CD4-positive, alpha-beta memory T cell (primary cell): ENCODE measurements at regions of chr11 and their contacts with region 1.

Region 1: DNA sequence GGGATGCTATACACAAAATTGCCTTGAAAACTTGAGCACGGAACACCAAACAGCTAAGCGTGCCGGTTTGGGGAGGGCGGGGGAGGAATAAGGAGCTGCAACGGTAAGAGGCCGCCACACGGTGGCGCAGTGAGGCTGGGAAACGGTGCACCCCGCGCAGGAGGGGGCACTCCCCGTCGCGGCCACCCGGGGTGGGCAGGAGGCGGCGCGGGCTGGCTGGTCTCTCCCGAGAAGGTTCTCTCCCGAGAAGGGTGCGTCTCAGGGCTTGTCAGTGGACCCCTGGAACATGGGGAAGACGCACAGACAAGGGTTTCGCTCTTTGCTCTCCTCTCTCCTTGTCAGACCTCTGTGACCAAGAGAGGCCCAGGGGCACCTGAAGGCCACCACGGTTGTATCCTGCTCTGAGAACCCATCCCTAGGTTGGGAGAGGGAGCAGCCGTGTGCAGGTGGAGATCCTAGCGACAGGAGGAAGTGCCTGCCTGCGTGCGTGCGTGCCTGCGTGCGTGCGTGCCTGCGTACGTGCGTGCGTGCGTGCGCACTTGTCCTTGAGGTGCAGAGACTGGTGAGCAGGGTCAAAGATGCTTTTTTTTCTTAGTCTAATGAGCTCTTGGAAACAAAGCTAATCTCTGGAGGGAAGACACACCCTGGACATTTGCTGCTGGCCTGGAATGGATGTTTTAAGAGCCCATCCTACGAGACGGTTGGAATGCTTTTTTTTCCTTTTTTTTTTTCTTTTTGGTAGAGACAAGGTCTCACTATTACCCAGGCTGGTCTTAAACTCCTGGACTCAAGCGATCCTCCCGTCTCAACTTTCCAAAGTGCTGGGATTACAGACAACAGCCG is 18.1 kb upstream of the JAM3 start:
- DNase-seq: peak; percentile 68 to 77 (median 70)
- H3K4me3 ChIP-seq: no peak overlapping the region
- H3K4me3 Mint-ChIP-seq: peak overlapping the region in 2 of 8 donors; percentile 36 to 65
- H3K27ac ChIP-seq: no peak overlapping the region
- H3K27ac Mint-ChIP-seq: peak overlapping the region in 1 of 7 donors; percentile 22
- H3K4me1 ChIP-seq: peaks cover 11% of the 10 kb centered on the region
- H3K4me1 Mint-ChIP-seq: peaks cover 0 to 4% (median 2%) of the 10 kb centered on the region in 4 donors
- H3K27me3 ChIP-seq: no peaks in the 10 kb centered on the region
- H3K27me3 Mint-ChIP-seq: peaks cover 17 to 23% of the 10 kb centered on the region in 2 donors

Region 2: GRCh38 chr11:133821776-133822175 is 229.0 kb before region 1 on chr11:
- CTCF ChIA-PET with region 1: no interaction called
- POLR2A ChIA-PET with region 1: no interaction called
- intact Hi-C with region 1: no loop called
- DNase-seq: no peak
- H3K4me3 ChIP-seq: no peak overlapping the region
- H3K4me3 Mint-ChIP-seq: no peak overlapping the region
- H3K27ac ChIP-seq: no peak overlapping the region
- H3K27ac Mint-ChIP-seq: no peak overlapping the region
- H3K4me1 ChIP-seq: no peaks in the 10 kb centered on the region
- H3K4me1 Mint-ChIP-seq: no peaks in the 10 kb centered on the region
- H3K27me3 ChIP-seq: no peaks in the 10 kb centered on the region
- H3K27me3 Mint-ChIP-seq: peaks cover 2 to 8% of the 10 kb centered on the region in 2 donors

Region 3: DNA sequence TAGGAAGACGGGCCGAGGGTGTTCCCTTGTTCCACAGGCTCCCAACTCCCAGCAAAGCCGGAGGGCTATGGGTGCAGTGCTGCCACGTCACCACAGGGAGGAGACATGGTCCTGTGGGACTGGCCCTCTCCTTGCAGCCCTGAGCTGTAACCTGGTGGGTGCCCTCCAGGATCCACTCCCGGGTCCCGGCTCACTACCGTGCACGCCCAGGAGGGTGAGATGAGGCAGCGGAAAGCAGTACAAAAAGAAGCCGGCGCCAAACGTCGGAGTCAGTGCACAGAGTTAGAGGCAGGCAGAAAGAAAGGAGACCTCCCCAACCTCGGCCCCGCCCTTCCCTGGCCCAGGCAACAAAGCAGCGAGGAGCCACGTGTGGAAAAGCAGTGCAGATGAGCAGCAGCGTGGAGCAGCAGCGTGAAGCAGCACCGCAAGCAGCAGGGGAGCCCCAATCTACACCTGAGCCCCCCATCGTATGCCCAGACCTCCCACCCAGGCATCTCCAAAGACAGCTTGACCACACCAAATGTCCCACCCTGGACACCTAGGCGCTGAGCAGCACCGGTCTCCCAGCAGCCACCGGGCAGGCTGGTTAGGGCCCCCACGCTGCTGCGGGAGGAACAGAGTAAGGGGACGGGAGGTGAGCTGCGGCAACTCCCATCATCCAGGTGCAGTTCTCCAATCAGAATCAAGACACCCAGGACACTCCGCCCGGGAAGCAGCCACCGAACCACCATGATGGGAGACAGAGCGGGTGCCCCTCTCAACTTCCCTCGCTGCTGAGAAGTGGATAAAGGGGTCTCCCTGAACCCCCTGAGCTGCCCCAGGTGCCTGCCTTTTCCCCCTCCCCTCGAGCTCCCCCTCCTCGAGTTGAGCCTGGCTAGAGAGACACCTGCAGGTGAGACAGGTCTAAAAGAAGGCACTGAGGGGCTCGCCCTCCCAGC is 122.8 kb before region 1 on chr11:
- CTCF ChIA-PET with region 1: interaction called, 40 read pairs
- POLR2A ChIA-PET with region 1: interaction called, 6 read pairs
- intact Hi-C with region 1: loop called (anchors 1 kb)
- DNase-seq: peak; percentile 64 to 79 (median 74)
- H3K4me3 ChIP-seq: peak overlapping the region in 1 of 2 donors; percentile 62
- H3K4me3 Mint-ChIP-seq: peak overlapping the region; percentile 85 to 96 (median 92)
- H3K27ac ChIP-seq: peak overlapping the region; percentile 44
- H3K27ac Mint-ChIP-seq: peak overlapping the region; percentile 49 to 95 (median 91)
- H3K4me1 ChIP-seq: peaks cover 28% of the 10 kb centered on the region
- H3K4me1 Mint-ChIP-seq: peaks cover 15 to 36% (median 20%) of the 10 kb centered on the region in 4 donors
- H3K27me3 ChIP-seq: no peaks in the 10 kb centered on the region
- H3K27me3 Mint-ChIP-seq: no peaks in the 10 kb centered on the region

Region 4: GRCh38 chr11:134019500-134019899 is 31.3 kb before region 1 on chr11:
- CTCF ChIA-PET with region 1: interaction called, 14 read pairs
- POLR2A ChIA-PET with region 1: no interaction called
- intact Hi-C with region 1: no loop called
- DNase-seq: no peak
- H3K4me3 ChIP-seq: no peak overlapping the region
- H3K4me3 Mint-ChIP-seq: no peak overlapping the region
- H3K27ac ChIP-seq: no peak overlapping the region
- H3K27ac Mint-ChIP-seq: peak overlapping the region in 1 of 7 donors; percentile 36
- H3K4me1 ChIP-seq: no peaks in the 10 kb centered on the region
- H3K4me1 Mint-ChIP-seq: no peaks in the 10 kb centered on the region
- H3K27me3 ChIP-seq: no peaks in the 10 kb centered on the region
- H3K27me3 Mint-ChIP-seq: peaks cover 28 to 31% of the 10 kb centered on the region in 2 donors

Region 5: DNA sequence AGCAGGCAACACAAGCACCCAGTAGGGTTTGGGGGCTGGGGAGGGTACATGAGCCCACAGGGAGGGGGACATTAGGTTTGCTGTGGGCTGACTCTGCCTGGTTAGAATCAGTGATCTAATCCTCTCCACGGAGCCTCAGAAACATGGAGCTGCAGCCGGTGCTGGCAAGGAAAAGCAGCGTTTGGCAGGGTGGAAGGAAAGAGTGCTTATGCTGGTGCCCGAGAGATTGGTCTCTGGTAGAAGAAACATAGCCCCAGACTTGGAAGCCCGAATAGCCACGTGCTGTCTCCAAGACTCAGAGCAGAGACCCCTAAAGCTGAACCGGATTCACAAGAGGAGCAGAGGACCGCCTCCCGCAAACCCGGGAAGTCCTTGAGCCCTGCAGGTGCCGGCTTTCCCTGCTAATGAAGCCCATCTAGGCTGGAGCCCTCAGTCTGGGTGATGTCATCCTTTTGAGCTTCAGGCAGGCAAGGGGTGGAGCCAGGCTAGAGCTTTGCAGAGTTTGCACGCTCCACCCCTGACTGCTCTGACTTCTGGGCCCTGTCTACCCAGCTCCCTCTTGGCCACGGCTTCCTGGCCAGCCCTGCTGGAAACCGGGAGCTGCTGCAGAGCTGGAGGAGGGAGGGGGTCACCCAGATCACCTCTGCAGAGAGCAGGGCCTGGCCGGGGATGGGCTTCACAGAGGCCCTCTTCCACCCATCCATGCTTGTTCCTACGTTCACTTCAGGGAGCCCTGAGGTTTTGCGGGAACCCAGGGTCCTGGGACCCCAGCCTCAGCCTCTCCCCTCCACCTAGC is 16.9 kb before region 1 on chr11:
- CTCF ChIA-PET with region 1: interaction called, 30 read pairs
- POLR2A ChIA-PET with region 1: interaction called, 7 read pairs
- intact Hi-C with region 1: loop called (anchors 2 kb)
- DNase-seq: peak; percentile 36 to 75 (median 50)
- H3K4me3 ChIP-seq: peak overlapping the region in 1 of 2 donors; percentile 29
- H3K4me3 Mint-ChIP-seq: peak overlapping the region in 7 of 8 donors; percentile 57 to 87 (median 70)
- H3K27ac ChIP-seq: peak overlapping the region; percentile 5
- H3K27ac Mint-ChIP-seq: peak overlapping the region; percentile 59 to 87 (median 67)
- H3K4me1 ChIP-seq: peaks cover 50% of the 10 kb centered on the region
- H3K4me1 Mint-ChIP-seq: peaks cover 27 to 70% (median 45%) of the 10 kb centered on the region in 4 donors
- H3K27me3 ChIP-seq: no peaks in the 10 kb centered on the region
- H3K27me3 Mint-ChIP-seq: no peaks in the 10 kb centered on the region

Region 6: DNA sequence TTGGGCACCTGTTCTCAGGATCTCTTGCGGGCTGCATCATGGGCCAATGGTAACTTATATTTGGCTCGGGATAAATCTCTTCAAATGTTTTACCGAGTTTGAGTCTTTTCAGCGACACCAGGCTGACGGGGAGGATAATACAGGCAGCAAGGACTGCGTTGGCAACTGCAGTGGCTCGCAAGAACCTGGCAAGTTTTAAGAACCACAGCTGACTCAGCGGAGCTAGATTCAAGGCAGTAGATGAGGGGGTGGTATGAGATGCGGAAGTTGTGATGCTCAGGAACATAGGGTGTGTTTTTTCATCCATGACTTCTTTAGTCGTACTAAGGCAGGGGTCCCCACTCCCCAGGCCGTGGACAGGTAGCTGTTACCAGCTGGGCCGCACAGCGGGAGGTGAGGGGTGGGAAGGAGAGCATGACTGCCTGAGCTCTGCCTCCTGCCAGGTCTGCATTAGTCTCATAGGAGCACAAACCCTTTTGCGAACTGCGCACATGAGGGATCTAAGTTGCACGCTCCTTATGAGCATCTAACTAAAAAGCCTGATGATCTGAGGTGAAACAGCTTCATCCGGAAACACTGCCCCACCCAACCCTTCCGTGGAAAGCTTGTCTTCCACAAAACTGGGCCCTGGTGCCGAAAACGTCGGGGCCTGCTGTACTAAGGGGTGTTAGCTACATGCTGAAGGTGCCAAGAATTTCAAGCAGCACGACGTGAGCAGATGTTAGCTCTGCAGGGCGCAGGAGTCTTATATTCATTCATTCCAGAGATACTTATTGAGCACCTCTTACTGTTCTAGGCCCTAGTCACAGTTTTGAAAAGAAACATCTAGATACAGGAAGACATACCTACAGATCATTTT is 11.7 kb after region 1 on chr11:
- CTCF ChIA-PET with region 1: interaction called, 52 read pairs
- POLR2A ChIA-PET with region 1: no interaction called
- intact Hi-C with region 1: no loop called
- DNase-seq: no peak
- H3K4me3 ChIP-seq: no peak overlapping the region
- H3K4me3 Mint-ChIP-seq: no peak overlapping the region
- H3K27ac ChIP-seq: no peak overlapping the region
- H3K27ac Mint-ChIP-seq: no peak overlapping the region
- H3K4me1 ChIP-seq: peaks cover 4% of the 10 kb centered on the region
- H3K4me1 Mint-ChIP-seq: peaks cover 6 to 9% (median 7%) of the 10 kb centered on the region in 4 donors
- H3K27me3 ChIP-seq: peaks cover 7% of the 10 kb centered on the region
- H3K27me3 Mint-ChIP-seq: peaks cover 22 to 28% of the 10 kb centered on the region in 2 donors

Region 7: GRCh38 chr11:134098566-134099184 is 47.9 kb after region 1 on chr11:
- CTCF ChIA-PET with region 1: interaction called, 21 read pairs
- POLR2A ChIA-PET with region 1: no interaction called
- intact Hi-C with region 1: loop called (anchors 1 kb)
- DNase-seq: peak in 3 of 5 donors; percentile 2 to 10 (median 4)
- H3K4me3 ChIP-seq: no peak overlapping the region
- H3K4me3 Mint-ChIP-seq: no peak overlapping the region
- H3K27ac ChIP-seq: no peak overlapping the region
- H3K27ac Mint-ChIP-seq: no peak overlapping the region
- H3K4me1 ChIP-seq: no peaks in the 10 kb centered on the region
- H3K4me1 Mint-ChIP-seq: peaks cover 0 to 6% (median 2%) of the 10 kb centered on the region in 4 donors
- H3K27me3 ChIP-seq: no peaks in the 10 kb centered on the region
- H3K27me3 Mint-ChIP-seq: peaks cover 1 to 2% of the 10 kb centered on the region in 2 donors

Region 8: GRCh38 chr11:134139873-134140331 is 89.1 kb after region 1 on chr11:
- CTCF ChIA-PET with region 1: interaction called, 43 read pairs
- POLR2A ChIA-PET with region 1: no interaction called
- intact Hi-C with region 1: loop called (anchors 1 kb)
- DNase-seq: peak; percentile 46 to 52 (median 50)
- H3K4me3 ChIP-seq: no peak overlapping the region
- H3K4me3 Mint-ChIP-seq: no peak overlapping the region
- H3K27ac ChIP-seq: no peak overlapping the region
- H3K27ac Mint-ChIP-seq: no peak overlapping the region
- H3K4me1 ChIP-seq: no peaks in the 10 kb centered on the region
- H3K4me1 Mint-ChIP-seq: peaks cover 0 to 8% (median 5%) of the 10 kb centered on the region in 4 donors
- H3K27me3 ChIP-seq: no peaks in the 10 kb centered on the region
- H3K27me3 Mint-ChIP-seq: no peaks in the 10 kb centered on the region